Heart right ventricle (tissue), 16 donors: ENCODE measurements at regions of chrX and their contacts with region 1.

Region 1: DNA sequence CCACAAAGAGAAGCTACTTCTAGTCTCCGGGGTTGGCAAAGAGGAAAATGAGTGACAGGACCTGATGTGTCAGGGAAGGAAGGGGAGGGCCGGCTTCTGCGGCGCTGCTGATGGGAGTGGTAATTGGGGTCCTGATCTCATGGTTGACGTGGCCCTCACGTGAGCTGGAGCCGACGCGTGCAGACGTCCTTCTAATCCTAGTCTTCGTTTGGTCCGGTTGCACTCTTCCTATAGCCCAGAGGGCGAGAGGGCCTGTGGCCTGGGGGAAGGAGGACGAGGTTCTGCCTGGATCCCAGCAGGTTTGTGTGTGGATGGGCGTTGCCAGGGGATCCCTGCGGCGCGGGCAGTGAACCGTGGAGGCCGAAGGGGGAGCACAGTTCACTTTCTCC is at the start of gene ARMCX1:
- DNase-seq: peak; percentile 66 to 77
- ATAC-seq: peak; percentile 93 to 98 (median 96)
- H3K4me3 ChIP-seq: peak within 1 kb of the TSS; percentile 44 to 72 (median 66)
- H3K27ac ChIP-seq: peak within 1 kb of the TSS; percentile 74 to 92 (median 88)
- H3K4me1 ChIP-seq: no peaks in the 10 kb centered on the region
- H3K27me3 ChIP-seq: peaks cover 0 to 14% (median 0%) of the 10 kb centered on the region in 7 donors
- CTCF ChIP-seq: no peak
- total RNA-seq, gene ARMCX1: 33.3 to 51.9 (median 37.7) TPM

Region 2: GRCh38 chrX:101410461-101410860 is 139.9 kb before region 1 on chrX:
- intact Hi-C with region 1: loop called in 5 of 10 experiments (anchors 5 to 10 kb)
- DNase-seq: no peak
- ATAC-seq: no peak
- H3K4me3 ChIP-seq: peak overlapping the region in 5 of 10 donors; percentile 7 to 79 (median 75)
- H3K27ac ChIP-seq: no peak overlapping the region
- H3K4me1 ChIP-seq: peaks cover 0 to 50% (median 31%) of the 10 kb centered on the region in 9 donors
- H3K27me3 ChIP-seq: peaks cover 0 to 4% (median 0%) of the 10 kb centered on the region in 7 donors
- CTCF ChIP-seq: no peak

Region 3: DNA sequence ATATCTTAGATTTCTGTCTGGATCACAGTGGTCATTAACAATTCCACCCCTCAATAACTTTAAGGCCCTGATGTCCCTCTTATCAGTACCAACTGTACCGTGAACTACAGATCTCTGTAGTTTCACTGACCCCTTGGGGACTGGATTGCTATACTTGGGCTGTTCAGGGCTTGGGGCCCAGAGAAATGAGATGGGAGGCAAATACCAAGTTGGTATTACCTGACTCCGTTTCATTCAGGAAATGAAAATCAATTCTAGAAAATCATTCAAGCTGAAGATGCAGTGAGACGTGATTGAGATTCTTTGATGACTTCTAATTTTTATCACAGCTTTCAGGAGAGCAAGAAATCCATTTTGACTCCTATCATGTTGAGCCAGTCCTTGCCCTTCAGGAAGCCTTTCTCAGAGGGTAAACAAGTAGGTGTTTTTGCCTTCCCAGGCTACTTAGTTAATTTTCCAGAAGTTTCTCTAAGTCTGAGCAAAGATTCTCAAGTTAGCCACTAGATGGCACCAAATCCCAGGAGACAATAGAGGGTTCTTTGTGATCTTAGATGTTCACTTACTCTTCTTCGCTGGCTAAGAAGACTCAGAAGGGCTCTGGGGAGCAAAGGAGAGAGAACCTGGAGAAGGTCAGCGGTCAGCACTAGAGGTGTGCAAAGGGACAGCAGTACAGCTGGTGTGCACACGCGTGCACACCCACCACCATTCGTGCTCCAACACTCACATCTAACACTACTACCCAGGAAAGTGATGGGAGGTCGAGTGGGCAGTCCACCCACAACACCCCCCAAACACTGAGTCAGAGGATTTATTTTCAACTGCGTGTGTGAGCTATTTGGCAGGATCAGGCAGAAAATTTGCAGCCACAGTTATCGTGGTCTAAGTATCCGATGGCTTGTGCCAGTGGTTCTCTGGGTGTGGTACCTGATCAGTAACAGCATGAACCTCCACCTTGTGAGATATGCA is 134.9 kb before region 1 on chrX:
- intact Hi-C with region 1: loop called in 5 of 10 experiments (anchors 5 to 10 kb)
- DNase-seq: peak in 1 of 2 donors; percentile 24
- ATAC-seq: peak in 5 of 8 donors; percentile 19 to 50 (median 31)
- H3K4me3 ChIP-seq: no peak overlapping the region
- H3K27ac ChIP-seq: peak overlapping the region in 7 of 10 donors; percentile 6 to 75 (median 66)
- H3K4me1 ChIP-seq: peaks cover 0 to 50% (median 18%) of the 10 kb centered on the region in 9 donors
- H3K27me3 ChIP-seq: peaks cover 0 to 45% (median 0%) of the 10 kb centered on the region in 7 donors
- CTCF ChIP-seq: peak; percentile 55 to 85 (median 68)

Region 4: GRCh38 chrX:101617211-101618191 is 67.1 kb after region 1 on chrX and contains the start of gene ARMCX6:
- intact Hi-C with region 1: loop called in 1 of 10 experiments (anchors 5 kb)
- DNase-seq: peak; percentile 74 to 75
- ATAC-seq: peak; percentile 90 to 98 (median 95)
- H3K4me3 ChIP-seq: peak within 1 kb of the TSS; percentile 32 to 83 (median 70)
- H3K27ac ChIP-seq: peak within 1 kb of the TSS; percentile 8 to 86 (median 78)
- H3K4me1 ChIP-seq: peaks cover 0 to 12% (median 5%) of the 10 kb centered on the region in 9 donors
- H3K27me3 ChIP-seq: no peaks in the 10 kb centered on the region
- CTCF ChIP-seq: peak; percentile 12 to 66 (median 47)
- total RNA-seq, gene ARMCX6: 16.8 to 43.1 (median 35.1) TPM

Region 5: DNA sequence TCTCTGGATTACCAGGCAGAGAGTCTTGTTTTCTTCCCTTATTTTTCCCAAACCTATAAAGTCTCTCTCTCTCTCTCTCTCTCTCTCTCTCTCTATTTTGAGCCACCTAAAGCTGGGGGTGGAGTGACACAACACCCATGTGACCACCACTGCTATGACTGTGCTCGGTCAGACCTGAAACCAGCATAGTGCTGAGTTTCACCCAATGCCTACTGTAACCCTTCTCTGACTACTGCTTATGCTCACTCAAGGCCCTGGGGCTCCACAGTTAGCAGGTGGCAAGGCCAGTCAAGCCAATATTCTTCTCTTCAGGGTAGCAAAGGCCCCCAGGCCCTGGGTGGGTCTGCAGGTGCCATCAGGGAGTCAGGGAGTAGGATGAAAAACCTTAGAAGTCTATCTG is 224.0 kb after region 1 on chrX:
- intact Hi-C with region 1: no loop called
- DNase-seq: no peak
- ATAC-seq: no peak
- H3K4me3 ChIP-seq: no peak overlapping the region
- H3K27ac ChIP-seq: no peak overlapping the region
- H3K4me1 ChIP-seq: no peaks in the 10 kb centered on the region
- H3K27me3 ChIP-seq: peaks cover 0 to 18% (median 0%) of the 10 kb centered on the region in 7 donors
- CTCF ChIP-seq: no peak